Cardiac septum (tissue), 1 donor: ENCODE measurements at regions of chr12 and their contacts with region 1.

Region 1: GRCh38 chr12:123983822-123984485 is 10.9 kb downstream of the ZNF664 start:
- DNase-seq: no peak

Region 2: GRCh38 chr12:123540899-123541662 is 442.9 kb before region 1 on chr12:
- intact Hi-C with region 1: no loop called
- DNase-seq: no peak

Region 3: GRCh38 chr12:123655420-123655819 is 328.5 kb before region 1 on chr12:
- intact Hi-C with region 1: loop called (anchors 10 kb)
- DNase-seq: no peak

Region 4: GRCh38 chr12:123905319-123905925 is 78.5 kb before region 1 on chr12:
- intact Hi-C with region 1: loop called (anchors 2 kb)
- DNase-seq: peak; percentile 74

Region 5: DNA sequence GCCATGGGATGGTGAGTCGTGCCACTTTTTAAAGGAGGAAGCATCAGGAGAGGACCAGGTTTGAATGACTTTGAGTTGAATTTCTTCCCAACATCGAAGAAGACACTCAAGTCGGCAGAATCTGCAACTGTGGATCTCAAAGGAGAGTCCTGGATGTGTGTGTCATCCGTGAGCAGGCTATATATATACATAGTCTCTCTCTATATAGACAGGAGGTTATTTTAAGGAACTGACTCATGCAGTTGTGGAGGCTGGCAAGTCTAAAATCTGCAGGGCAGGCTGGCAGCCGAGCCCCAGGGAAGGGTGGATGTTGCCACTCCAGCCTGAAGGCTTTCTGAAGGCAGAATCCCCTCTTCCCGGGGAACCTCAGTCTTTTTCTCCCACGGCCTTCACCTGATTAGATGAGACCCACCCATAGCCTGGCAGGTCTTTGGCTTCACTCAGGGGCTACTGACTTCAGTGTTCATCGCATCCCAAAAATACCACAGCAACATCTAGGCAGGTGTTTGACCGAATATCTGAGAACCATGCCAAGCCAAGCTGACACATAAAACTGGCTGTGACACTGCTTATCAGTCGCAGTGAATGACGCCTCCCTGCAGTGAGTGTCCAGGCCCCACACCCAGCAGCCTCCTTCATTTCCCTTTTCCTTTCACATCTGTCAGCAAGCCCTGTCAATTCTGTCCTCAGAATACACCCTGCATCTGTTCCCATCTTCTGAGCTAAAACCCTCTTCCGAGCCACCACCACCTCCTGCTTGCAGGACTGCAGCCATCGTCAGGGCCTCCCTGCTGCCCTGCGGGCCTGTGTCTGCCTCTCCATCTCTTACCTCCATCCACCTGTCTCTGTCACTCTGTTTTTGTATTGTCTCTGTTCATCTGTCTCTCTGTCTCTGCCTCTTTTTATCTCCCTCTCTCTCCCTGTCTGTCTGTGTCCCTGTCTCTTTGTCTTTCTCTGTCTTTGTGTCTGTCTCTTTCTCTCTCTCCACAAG is 43.1 kb after region 1 on chr12:
- intact Hi-C with region 1: loop called (anchors 5 kb)
- DNase-seq: no peak